ENCODE measurements at regions of chr1 and their contacts with region 1.

Region 1: DNA sequence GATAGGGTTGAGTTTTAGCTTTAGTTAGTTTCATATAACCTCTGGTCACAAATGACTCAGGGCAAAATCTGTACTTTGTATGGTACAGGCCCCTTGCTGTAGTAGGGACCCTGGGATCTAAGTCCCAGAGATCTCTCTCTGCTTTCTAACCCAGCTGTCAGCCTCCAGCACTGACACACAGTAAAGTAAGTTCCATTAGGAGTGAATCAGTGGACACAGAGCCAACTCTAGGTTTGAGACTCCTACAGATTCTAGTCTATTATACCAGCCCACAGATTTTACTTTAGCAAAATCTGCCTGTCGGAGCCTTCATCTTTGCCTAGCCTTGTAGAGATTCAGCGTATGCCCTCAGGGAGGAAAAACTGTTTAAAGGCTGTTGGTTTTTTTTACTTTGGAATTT is 52.5 kb downstream of the ANGPTL1 start:
- DNase-seq: no peak
- ATAC-seq: no peak
- H3K4me3 ChIP-seq: no peak overlapping the region
- H3K27ac ChIP-seq: no peak overlapping the region
- H3K4me1 ChIP-seq: no peaks in the 10 kb centered on the region
- H3K27me3 ChIP-seq: no peaks in the 10 kb centered on the region
- CTCF ChIP-seq: no peak

Region 2: GRCh38 chr1:178768423-178768822 is 50.0 kb before region 1 on chr1:
- intact Hi-C with region 1: loop called in 1 of 2 experiments (anchors 5 kb)
- DNase-seq: no peak
- ATAC-seq: peak; percentile 51 to 74 (median 68)
- H3K4me3 ChIP-seq: no peak overlapping the region
- H3K27ac ChIP-seq: no peak overlapping the region
- H3K4me1 ChIP-seq: no peaks in the 10 kb centered on the region
- H3K27me3 ChIP-seq: no peaks in the 10 kb centered on the region
- CTCF ChIP-seq: peak; percentile 77

Region 3: GRCh38 chr1:178864326-178864725 is 45.9 kb after region 1 on chr1:
- intact Hi-C with region 1: no loop called
- DNase-seq: no peak
- ATAC-seq: no peak
- H3K4me3 ChIP-seq: peak overlapping the region; percentile 25
- H3K27ac ChIP-seq: peak overlapping the region; percentile 34
- H3K4me1 ChIP-seq: peaks cover 11% of the 10 kb centered on the region
- H3K27me3 ChIP-seq: no peaks in the 10 kb centered on the region
- CTCF ChIP-seq: no peak